AG04449 (cell line): ENCODE measurements at regions of chr1 and their contacts with region 1.

Region 1: GRCh38 chr1:15128520-15129313 is 24.8 kb upstream of the TMEM51 start:
- DNase-seq: no peak
- H3K4me3 ChIP-seq: no peak overlapping the region
- CTCF ChIP-seq: peak; percentile 91

Region 2: GRCh38 chr1:15110875-15111230 is 17.9 kb before region 1 on chr1:
- CTCF ChIA-PET with region 1: interaction called, 25 read pairs
- POLR2A ChIA-PET with region 1: no interaction called
- DNase-seq: no peak
- H3K4me3 ChIP-seq: no peak overlapping the region
- CTCF ChIP-seq: no peak

Region 3: GRCh38 chr1:15116966-15117365 is 11.8 kb before region 1 on chr1:
- CTCF ChIA-PET with region 1: interaction called, 25 read pairs
- POLR2A ChIA-PET with region 1: no interaction called
- DNase-seq: no peak
- H3K4me3 ChIP-seq: no peak overlapping the region
- CTCF ChIP-seq: no peak

Region 4: GRCh38 chr1:15141935-15142539 is 13.3 kb after region 1 on chr1:
- CTCF ChIA-PET with region 1: interaction called, 44 read pairs
- POLR2A ChIA-PET with region 1: no interaction called
- DNase-seq: no peak
- H3K4me3 ChIP-seq: no peak overlapping the region
- CTCF ChIP-seq: no peak

Region 5: GRCh38 chr1:15152318-15153183 is 23.8 kb after region 1 on chr1:
- CTCF ChIA-PET with region 1: interaction called, 26 read pairs
- POLR2A ChIA-PET with region 1: no interaction called
- DNase-seq: peak; percentile 31
- H3K4me3 ChIP-seq: peak overlapping the region; percentile 58
- CTCF ChIP-seq: peak; percentile 76

Region 6: DNA sequence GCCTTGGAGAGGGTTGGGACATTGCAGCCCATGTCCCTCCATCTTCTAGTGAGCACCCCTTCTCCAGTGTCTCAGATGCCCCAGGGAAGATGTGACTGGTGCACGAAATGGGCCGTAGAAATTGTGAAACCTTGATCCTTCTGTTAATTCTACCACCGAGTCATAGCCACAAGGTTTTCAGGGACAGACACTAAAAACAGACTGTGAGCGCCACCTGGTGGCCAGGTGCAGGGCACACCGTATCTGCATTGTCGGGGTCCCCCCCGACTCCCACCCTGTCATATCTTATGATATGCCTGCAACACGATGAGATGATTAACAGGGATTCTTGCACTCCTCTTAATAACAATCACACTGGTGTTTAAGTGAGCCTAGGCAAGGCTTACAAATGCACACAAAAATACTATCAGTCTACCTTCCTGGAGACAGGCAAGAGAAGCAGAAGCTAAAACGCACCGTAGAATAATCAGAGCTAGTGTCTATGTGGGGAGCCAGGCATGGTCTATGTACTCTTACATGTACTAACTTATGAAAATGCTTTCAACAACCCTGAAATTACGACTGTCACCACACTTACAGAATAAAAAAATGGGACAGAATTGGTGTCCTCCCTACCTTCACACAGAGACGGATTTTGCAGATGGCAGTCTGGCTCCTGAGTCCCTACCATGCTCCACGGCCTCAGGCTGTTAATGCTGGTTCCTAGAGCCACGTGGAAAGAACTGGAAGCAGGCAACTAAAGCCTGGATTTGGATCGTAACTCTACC is 176.2 kb after region 1 on chr1:
- CTCF ChIA-PET with region 1: interaction called, 39 read pairs
- POLR2A ChIA-PET with region 1: no interaction called
- DNase-seq: no peak
- H3K4me3 ChIP-seq: peak overlapping the region; percentile 16
- CTCF ChIP-seq: peak; percentile 56

Region 7: GRCh38 chr1:15430787-15431570 is 302.3 kb after region 1 on chr1:
- CTCF ChIA-PET with region 1: interaction called, 14 read pairs
- POLR2A ChIA-PET with region 1: no interaction called
- DNase-seq: no peak
- H3K4me3 ChIP-seq: no peak overlapping the region
- CTCF ChIP-seq: peak; percentile 93

Region 8: DNA sequence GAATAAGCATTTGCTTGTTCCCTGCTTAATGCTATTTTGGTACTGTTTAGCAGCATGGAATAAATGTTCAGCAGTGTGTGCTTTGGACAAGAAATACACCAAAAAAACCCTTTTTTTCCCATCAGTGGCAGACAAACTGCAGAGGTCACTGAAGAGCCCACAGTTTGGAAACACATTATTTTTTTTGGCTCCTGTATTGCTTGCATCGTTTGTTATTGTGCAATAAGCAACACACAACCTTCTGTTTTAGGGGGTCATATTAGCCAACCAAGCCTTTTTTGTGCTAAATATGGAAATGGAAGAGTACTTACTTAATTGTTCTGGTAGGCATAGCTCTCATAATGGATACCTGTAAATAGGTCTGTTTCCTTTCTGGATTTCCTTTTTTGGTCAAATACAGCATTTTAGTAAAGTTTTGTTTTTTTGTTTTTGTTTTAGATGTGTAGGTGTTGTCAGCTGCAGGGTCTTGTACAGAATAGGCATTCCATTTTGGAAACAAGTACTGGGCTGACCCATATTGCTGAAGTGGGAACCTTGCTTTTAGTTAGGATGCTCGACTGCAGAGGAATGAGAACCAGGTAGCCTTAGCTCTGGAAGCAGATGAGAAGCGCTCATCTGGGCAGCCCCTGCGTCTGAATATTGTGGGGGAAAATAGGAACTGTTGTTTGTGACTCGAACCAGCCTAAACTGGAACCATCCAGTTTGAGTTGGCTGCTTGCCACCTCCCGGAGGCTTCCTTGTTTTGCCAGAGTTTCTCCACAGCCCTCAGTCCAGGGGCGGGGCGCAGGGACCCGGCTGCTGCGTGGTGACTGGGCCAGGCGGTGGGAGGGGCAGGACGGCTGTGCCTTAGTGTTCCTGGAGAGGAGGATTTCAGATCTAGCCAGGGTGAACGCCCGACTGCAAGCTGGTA is 757.2 kb after region 1 on chr1:
- CTCF ChIA-PET with region 1: no interaction called
- POLR2A ChIA-PET with region 1: no interaction called
- DNase-seq: peak; percentile 59
- H3K4me3 ChIP-seq: peak overlapping the region; percentile 52
- CTCF ChIP-seq: peak; percentile 14